ENCODE measurements at regions of chr9 and their contacts with region 1.

Region 1: DNA sequence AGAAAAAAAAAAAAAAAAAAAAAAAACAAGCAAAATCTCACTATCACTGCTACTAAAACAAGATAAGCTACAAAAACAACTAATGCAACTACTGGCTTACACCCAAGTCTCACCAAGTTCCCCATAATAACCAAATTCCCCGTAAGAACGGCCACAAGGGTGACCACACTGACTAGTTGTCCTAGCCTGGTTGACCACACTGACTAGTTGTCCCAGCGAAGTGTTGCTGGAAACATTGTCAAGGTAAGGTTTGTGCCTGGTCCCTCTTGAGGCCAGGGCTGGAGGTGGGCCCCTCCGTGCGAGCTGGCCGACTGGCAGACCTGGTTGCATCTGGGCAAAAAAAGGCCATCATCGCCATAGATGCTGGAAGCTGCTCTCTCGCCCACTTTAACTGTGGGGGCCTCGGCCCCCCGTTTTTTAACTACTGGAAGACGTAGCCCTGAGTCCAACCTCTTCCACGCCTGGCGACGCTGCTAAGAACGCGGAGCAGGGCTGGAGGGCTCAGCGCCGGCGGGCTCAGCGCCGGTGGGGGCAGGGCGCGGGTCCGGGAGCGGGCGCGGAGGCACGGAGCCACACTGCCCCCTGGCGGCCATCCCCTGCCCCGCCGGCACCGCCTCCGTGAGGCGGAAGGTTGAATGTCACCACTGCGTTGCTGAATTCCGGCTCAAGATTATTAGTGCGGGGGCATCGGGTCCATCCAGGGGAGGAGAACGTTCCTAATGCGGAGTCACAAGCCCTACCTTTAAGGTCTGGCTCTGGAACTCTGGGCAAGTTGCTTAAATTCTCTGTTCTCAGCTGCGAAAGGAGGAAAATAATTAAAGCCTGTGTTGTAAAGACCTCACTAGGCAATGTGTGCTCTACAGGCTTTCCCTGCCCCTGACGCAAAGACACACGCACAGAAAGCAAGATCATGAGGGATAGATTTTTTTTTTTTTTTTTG is 84.0 kb downstream of the HSD17B3 start:
- DNase-seq: peak; percentile 86
- ATAC-seq: peak; percentile 90
- H3K4me3 Mint-ChIP-seq: peak overlapping the region; percentile 57
- H3K27ac Mint-ChIP-seq: peak overlapping the region; percentile 42
- H3K4me1 Mint-ChIP-seq: peaks cover 9% of the 10 kb centered on the region
- H3K27me3 Mint-ChIP-seq: peaks cover 50% of the 10 kb centered on the region

Region 2: DNA sequence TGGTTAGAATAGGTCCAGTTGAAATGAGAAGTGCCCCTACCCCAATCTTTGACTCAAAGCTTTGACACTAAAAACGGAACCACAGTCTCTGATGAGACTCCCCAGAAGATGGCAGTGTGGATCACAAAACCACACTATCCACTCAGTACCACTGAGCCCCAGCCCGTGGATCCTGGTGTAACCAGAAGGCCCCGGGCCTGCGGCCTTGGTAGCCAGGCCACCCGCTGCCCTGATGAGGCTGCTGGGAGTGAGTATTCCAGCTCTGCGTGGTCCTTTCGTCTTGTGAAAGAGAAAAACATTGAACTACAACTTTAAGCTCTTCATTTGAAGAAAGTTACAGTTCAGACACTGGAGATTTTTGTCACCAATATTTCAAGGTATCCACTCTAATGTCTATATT is 1536.5 kb before region 1 on chr9:
- CTCF ChIA-PET with region 1: interaction called, 4 read pairs
- POLR2A ChIA-PET with region 1: no interaction called
- intact Hi-C with region 1: loop called in 1 of 2 experiments (anchors 5 kb)
- DNase-seq: peak; percentile 71
- ATAC-seq: peak; percentile 92
- H3K4me3 Mint-ChIP-seq: no peak overlapping the region
- H3K27ac Mint-ChIP-seq: no peak overlapping the region
- H3K4me1 Mint-ChIP-seq: no peaks in the 10 kb centered on the region
- H3K27me3 Mint-ChIP-seq: peaks cover 21% of the 10 kb centered on the region

Region 3: GRCh38 chr9:95379630-95380029 is 838.4 kb before region 1 on chr9:
- CTCF ChIA-PET with region 1: interaction called, 8 read pairs
- POLR2A ChIA-PET with region 1: no interaction called
- intact Hi-C with region 1: loop called in 1 of 2 experiments (anchors 2 kb)
- DNase-seq: peak; percentile 48
- ATAC-seq: no peak
- H3K4me3 Mint-ChIP-seq: no peak overlapping the region
- H3K27ac Mint-ChIP-seq: no peak overlapping the region
- H3K4me1 Mint-ChIP-seq: peaks cover 4% of the 10 kb centered on the region
- H3K27me3 Mint-ChIP-seq: peaks cover 11% of the 10 kb centered on the region

Region 4: DNA sequence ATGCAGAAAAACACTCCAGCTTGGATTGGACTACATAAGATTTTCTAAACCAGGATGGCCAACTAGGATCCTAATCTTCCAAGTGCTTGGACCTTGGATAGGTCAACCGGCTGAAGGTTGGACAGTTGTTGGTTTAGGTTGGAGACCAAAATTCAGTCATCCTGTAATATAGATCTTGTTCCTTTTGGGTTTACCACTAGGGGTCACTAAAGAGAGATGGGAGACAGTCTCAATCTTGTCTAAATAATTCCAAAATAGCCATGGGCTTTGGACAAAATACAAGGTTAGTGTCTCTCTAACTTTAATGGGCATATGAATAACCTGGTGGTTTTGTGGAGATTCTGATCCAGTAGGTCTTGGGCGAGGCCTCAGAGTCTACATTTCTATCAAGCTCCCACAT is 491.3 kb before region 1 on chr9:
- CTCF ChIA-PET with region 1: interaction called, 4 read pairs
- POLR2A ChIA-PET with region 1: no interaction called
- intact Hi-C with region 1: loop called in 1 of 2 experiments (anchors 1 kb)
- DNase-seq: no peak
- ATAC-seq: no peak
- H3K4me3 Mint-ChIP-seq: no peak overlapping the region
- H3K27ac Mint-ChIP-seq: no peak overlapping the region
- H3K4me1 Mint-ChIP-seq: peaks cover 37% of the 10 kb centered on the region
- H3K27me3 Mint-ChIP-seq: peaks cover 7% of the 10 kb centered on the region

Region 5: DNA sequence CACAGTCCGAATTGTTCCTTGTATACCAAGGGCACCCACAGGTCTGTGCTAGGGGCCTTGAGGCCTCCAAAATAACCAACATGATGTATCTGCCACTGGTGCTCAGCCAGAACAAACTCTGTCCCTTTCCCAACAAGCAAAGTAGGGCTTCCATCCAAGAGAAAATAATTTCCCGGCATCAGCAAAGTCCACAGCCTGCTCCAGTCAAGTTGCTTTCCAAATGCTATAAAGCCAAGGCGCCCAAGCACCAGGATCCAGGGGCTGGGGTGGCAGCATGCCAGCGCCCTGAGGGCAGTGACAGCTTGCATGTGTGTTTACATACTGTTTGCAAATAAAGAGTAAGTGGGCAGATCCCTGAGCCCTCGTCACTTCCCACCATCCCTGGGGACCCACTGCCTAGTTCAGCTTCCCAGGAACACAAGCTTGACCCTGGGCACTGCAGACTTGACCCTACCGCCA is 186.6 kb before region 1 on chr9:
- CTCF ChIA-PET with region 1: no interaction called
- POLR2A ChIA-PET with region 1: no interaction called
- intact Hi-C with region 1: no loop called
- DNase-seq: no peak
- ATAC-seq: no peak
- H3K4me3 Mint-ChIP-seq: no peak overlapping the region
- H3K27ac Mint-ChIP-seq: no peak overlapping the region
- H3K4me1 Mint-ChIP-seq: peaks cover 12% of the 10 kb centered on the region
- H3K27me3 Mint-ChIP-seq: peaks cover 25% of the 10 kb centered on the region

Region 6: DNA sequence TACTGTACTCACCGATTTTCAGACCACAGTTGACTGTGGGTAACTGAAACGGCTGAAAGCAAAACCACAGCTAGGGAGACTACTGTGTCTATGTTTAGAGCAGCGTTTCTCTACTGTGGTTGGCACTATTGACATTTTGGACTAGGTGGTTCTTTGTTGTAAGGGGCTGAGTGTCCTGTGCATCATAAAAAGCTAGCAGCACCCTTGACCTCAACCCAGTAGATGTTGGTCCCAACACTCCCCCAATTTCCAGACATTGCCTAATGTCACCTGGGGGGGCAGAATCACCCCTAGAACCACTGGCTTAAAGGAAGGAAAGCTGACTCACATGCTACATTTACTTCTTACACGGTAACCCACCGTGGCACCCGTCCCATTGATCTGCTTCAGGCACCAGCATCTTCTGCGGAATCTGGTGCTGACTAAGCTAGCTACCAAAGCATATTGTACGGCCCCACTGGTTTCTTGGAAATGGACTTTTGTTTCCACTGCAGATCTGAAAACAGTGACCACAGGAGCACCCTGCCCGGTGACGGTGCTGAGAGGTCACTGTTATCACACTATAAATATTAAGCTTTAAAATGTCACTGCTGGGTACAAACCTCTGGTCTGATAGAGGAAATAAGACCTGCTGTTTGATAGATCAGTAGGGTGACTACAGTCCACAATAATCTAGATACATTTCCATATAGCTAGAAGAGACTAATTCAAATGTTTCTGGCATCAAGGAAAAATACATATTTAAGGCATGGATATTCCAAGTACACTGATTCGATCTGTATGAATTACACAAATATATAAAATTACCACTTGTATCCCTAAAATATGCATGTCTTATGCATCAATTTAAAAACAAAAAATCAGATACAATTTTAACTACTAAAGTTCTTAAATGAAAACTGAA is 67.4 kb before region 1 on chr9:
- CTCF ChIA-PET with region 1: no interaction called
- POLR2A ChIA-PET with region 1: no interaction called
- intact Hi-C with region 1: loop called (anchors 5 to 10 kb)
- DNase-seq: peak; percentile 77
- ATAC-seq: peak; percentile 90
- H3K4me3 Mint-ChIP-seq: no peak overlapping the region
- H3K27ac Mint-ChIP-seq: no peak overlapping the region
- H3K4me1 Mint-ChIP-seq: peaks cover 25% of the 10 kb centered on the region
- H3K27me3 Mint-ChIP-seq: peaks cover 26% of the 10 kb centered on the region

Measured in activated CD4-positive, alpha-beta T cell treated with anti-CD3 and anti-CD28 coated beads for 36 hours (primary cell).